K562 (cell line): ENCODE measurements at regions of chr15 and their contacts with region 1.

Region 1: GRCh38 chr15:40893733-40894688 is at the start of gene VPS18:
- DNase-seq: peak; percentile 94 to 98 (median 94)
- ATAC-seq: peak; percentile 96
- H3K4me3 ChIP-seq: peak within 1 kb of the TSS; percentile 92
- H3K27ac ChIP-seq: peak within 1 kb of the TSS; percentile 76
- H3K4me1 ChIP-seq: peaks cover 8 to 16% of the 10 kb centered on the region in 2 experiments; a peak in 4 of 5 replicates
- H3K27me3 ChIP-seq: no peaks in the 10 kb centered on the region
- CTCF ChIP-seq: peak; percentile 89 to 96 (median 95)
- EP300 ChIP-seq: 0 out of 2 replicates have a peak, but pooled peaks have one; percentile 15
- POLR2A ChIP-seq: peak; percentile 64
- RAD21 ChIP-seq: peak; percentile 91 to 96
- polyA plus RNA-seq, gene VPS18: 0.73 to 0.88 TPM

Region 2: DNA sequence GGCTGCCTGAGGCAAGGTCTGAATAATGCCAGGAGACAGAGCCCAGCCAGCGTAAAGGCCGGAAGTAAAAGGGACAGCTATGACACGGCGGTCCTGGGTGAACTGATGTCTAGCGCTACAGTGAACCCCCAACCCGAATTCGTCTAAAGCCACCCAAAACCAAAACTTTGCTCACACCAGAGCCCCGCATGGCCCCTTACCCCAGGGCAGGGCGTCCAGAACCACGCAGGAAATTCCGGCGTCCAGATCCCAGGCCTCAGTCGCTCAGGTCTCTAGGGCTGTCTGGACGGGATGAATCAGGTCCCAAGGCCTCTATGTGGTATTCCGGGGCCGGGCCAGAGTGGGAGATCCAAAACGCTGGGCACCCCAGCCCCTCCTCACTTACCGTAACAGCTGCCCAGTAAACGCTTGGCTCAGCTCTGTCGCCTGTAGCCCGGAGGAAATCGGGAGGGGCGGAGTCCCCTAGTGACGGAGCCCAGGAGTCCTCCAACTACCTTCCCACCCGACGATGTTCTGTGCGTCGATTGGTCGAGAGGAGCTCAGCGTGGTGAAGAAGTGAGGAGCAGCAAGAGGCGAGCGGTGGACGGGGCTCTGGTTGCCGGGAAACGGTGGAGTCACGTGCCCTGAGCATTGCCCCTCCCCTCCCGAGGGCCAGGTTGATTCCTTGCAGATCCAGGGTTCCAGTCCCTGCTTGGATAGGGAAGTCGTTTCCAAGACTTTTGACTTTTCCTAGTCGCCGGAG is 329.2 kb before region 1 on chr15 and contains the start of gene CCDC32:
- CTCF ChIA-PET with region 1: no interaction called
- POLR2A ChIA-PET with region 1: no interaction called
- in situ Hi-C with region 1: no loop called
- intact Hi-C with region 1: no loop called
- DNase-seq: peak; percentile 95 to 99 (median 97)
- ATAC-seq: peak; percentile 95
- H3K4me3 ChIP-seq: peak within 1 kb of the TSS; percentile 70
- H3K27ac ChIP-seq: peak within 1 kb of the TSS; percentile 76
- H3K4me1 ChIP-seq: peaks cover 15 to 21% of the 10 kb centered on the region in 2 experiments; a peak in 4 of 5 replicates
- H3K27me3 ChIP-seq: no peaks in the 10 kb centered on the region
- CTCF ChIP-seq: no peak
- EP300 ChIP-seq: no peak
- POLR2A ChIP-seq: peak; percentile 89
- RAD21 ChIP-seq: no peak
- polyA plus RNA-seq, gene CCDC32: 54.4 to 94.8 TPM

Region 3: GRCh38 chr15:40593588-40594428 is 300.2 kb before region 1 on chr15 and contains the start of gene KNL1:
- CTCF ChIA-PET with region 1: no interaction called
- POLR2A ChIA-PET with region 1: no interaction called
- in situ Hi-C with region 1: no loop called
- intact Hi-C with region 1: loop called (anchors 10 kb)
- DNase-seq: peak; percentile 91 to 95 (median 94)
- ATAC-seq: peak; percentile 83
- H3K4me3 ChIP-seq: peak within 1 kb of the TSS; percentile 74
- H3K27ac ChIP-seq: peak within 1 kb of the TSS; percentile 88
- H3K4me1 ChIP-seq: peaks cover 13 to 16% of the 10 kb centered on the region in 2 experiments; a peak in 4 of 5 replicates
- H3K27me3 ChIP-seq: no peaks in the 10 kb centered on the region
- CTCF ChIP-seq: no peak
- EP300 ChIP-seq: peak; percentile 64; the same call in 1 of the 2 replicates
- POLR2A ChIP-seq: peak; percentile 90
- RAD21 ChIP-seq: no peak; a peak in 1 of 4 replicates
- polyA plus RNA-seq, gene KNL1: 14.5 to 17.9 TPM

Region 4: GRCh38 chr15:40702077-40702476 is 191.9 kb before region 1 on chr15:
- CTCF ChIA-PET with region 1: interaction called, 5 read pairs
- POLR2A ChIA-PET with region 1: no interaction called
- in situ Hi-C with region 1: no loop called
- intact Hi-C with region 1: loop called (anchors 10 kb)
- DNase-seq: peak in 1 of 4 experiments; percentile 13
- ATAC-seq: 0 out of 3 replicates have a peak, but pooled peaks have one; percentile 31
- H3K4me3 ChIP-seq: no peak overlapping the region
- H3K27ac ChIP-seq: no peak overlapping the region
- H3K4me1 ChIP-seq: no peaks in the 10 kb centered on the region
- H3K27me3 ChIP-seq: no peaks in the 10 kb centered on the region
- CTCF ChIP-seq: peak; percentile 17 to 54 (median 31); a peak in 3 of 6 replicates
- EP300 ChIP-seq: no peak
- POLR2A ChIP-seq: no peak
- RAD21 ChIP-seq: peak; percentile 28 to 29; a peak in 2 of 4 replicates

Region 5: DNA sequence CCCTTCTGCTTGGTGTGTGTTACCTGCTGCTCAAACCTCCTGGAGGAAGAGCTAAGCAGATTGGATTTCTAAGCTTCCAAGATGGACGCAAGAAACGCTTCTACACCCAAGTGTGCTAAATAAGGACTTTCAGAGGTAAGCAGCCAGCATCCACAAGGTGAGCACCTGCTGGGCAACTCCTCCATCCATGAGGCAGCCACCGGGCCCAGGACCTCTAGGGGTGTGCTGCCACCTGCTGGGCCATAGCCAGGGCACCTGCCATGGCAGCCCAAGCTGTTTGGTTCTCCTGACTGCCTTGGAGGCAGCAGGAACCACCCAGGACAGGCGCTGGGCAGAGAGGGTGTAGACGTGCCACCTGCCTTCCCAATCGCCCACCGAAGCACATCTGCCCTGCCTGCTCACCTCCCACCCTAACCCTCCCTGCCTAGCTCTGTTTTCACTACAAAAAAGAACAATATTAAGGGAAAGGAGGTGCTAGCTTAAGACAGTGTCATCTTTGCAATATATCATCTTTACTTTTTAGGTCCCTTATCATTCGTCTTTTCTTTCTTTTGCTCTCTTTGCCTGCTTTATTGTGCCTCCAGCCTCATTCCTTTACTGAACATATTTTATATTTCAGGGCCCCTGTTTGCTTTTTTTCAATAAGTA is 111.3 kb before region 1 on chr15:
- CTCF ChIA-PET with region 1: interaction called, 66 read pairs
- POLR2A ChIA-PET with region 1: interaction called, 6 read pairs
- in situ Hi-C with region 1: no loop called
- intact Hi-C with region 1: loop called (anchors 1 kb)
- DNase-seq: peak; percentile 40 to 70 (median 58)
- ATAC-seq: peak; percentile 99
- H3K4me3 ChIP-seq: no peak overlapping the region
- H3K27ac ChIP-seq: no peak overlapping the region
- H3K4me1 ChIP-seq: peaks cover 3 to 4% of the 10 kb centered on the region in 2 experiments; a peak in 2 of 5 replicates
- H3K27me3 ChIP-seq: no peaks in the 10 kb centered on the region
- CTCF ChIP-seq: peak; percentile 85 to 90 (median 90)
- EP300 ChIP-seq: no peak
- POLR2A ChIP-seq: no peak
- RAD21 ChIP-seq: peak; percentile 88 to 90

Region 6: DNA sequence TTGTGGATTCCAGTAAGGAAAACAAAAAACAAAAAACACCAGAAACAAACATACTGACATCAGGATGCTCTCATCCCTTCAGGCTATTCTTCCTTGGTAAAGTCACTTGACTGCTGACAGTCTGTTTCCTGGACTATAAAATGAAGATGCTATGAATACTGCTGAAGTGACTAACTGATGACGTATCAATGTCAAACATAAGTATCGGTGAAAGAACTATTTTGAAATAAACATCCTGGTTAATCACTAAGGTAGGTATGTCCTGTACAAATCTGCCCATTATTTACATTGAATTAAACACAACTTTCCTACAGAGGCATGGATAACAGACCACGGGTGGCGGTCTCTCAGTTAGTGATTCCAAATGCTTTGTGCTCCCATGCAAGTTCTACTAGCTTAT is 105.2 kb after region 1 on chr15:
- CTCF ChIA-PET with region 1: no interaction called
- POLR2A ChIA-PET with region 1: no interaction called
- in situ Hi-C with region 1: no loop called
- intact Hi-C with region 1: no loop called
- DNase-seq: no peak
- ATAC-seq: no peak
- H3K4me3 ChIP-seq: no peak overlapping the region
- H3K27ac ChIP-seq: no peak overlapping the region
- H3K4me1 ChIP-seq: no peaks in the 10 kb centered on the region
- H3K27me3 ChIP-seq: no peaks in the 10 kb centered on the region
- CTCF ChIP-seq: no peak
- EP300 ChIP-seq: no peak
- POLR2A ChIP-seq: no peak
- RAD21 ChIP-seq: no peak